Ovary (tissue), 10 donors: ENCODE measurements at regions of chr3 and their contacts with region 1.

Region 1: DNA sequence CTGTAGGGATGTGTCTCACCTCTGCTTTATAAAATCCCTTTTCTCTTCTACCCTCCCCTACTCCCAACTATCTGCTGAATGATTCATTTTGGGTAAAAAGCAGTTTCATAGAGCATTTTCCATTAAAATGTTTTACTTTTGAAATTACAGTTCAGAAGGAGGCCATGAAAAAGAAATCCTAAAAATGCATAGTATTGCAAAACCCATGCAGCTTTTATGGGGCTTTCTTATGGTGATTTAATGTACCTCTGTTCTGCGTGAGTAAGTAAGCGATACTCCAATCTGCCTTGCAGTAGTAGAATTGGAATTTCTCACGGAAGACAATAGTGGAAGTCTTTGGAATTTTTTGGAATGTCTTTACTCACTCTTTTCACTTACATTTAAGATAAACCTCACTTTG is 111.9 kb downstream of the ARPP21 start:
- DNase-seq: no peak
- H3K4me3 ChIP-seq: no peak overlapping the region
- H3K27ac ChIP-seq: no peak overlapping the region
- H3K4me1 ChIP-seq: no peaks in the 10 kb centered on the region
- H3K27me3 ChIP-seq: no peaks in the 10 kb centered on the region
- CTCF ChIP-seq: no peak
- EP300 ChIP-seq: no peak
- POLR2A ChIP-seq: no peak

Region 2: GRCh38 chr3:34504775-34505174 is 1246.4 kb before region 1 on chr3:
- intact Hi-C with region 1: no loop called
- DNase-seq: no peak
- H3K4me3 ChIP-seq: no peak overlapping the region
- H3K27ac ChIP-seq: no peak overlapping the region
- H3K4me1 ChIP-seq: no peaks in the 10 kb centered on the region
- H3K27me3 ChIP-seq: no peaks in the 10 kb centered on the region
- CTCF ChIP-seq: no peak
- EP300 ChIP-seq: no peak
- POLR2A ChIP-seq: no peak

Region 3: DNA sequence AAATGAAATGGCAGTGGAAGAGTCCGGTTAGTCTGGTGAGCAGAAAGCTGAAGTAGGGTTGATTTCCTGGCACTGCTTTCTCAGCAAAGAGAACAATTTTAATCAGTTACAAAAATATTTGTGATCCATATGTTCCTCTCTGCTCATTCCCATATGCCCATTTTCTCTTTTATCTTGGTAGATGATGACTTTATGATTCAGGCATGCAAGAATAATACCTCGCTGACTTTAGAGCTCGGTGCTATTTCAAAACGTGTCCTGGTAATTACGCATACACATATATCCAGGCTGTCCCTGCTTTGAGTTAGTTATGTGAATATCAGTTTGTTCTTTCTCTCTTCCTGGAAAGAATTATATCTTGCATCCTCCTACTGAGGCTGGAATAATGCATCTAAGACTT is 73.4 kb before region 1 on chr3:
- intact Hi-C with region 1: no loop called
- DNase-seq: no peak
- H3K4me3 ChIP-seq: no peak overlapping the region
- H3K27ac ChIP-seq: no peak overlapping the region
- H3K4me1 ChIP-seq: no peaks in the 10 kb centered on the region
- H3K27me3 ChIP-seq: no peaks in the 10 kb centered on the region
- CTCF ChIP-seq: no peak
- EP300 ChIP-seq: no peak
- POLR2A ChIP-seq: no peak

Region 4: GRCh38 chr3:36893137-36893557 is 1141.9 kb after region 1 on chr3:
- intact Hi-C with region 1: loop called in 1 of 4 experiments (anchors 5 kb)
- DNase-seq: no peak
- H3K4me3 ChIP-seq: no peak overlapping the region
- H3K27ac ChIP-seq: no peak overlapping the region
- H3K4me1 ChIP-seq: no peaks in the 10 kb centered on the region
- H3K27me3 ChIP-seq: no peaks in the 10 kb centered on the region
- CTCF ChIP-seq: no peak
- EP300 ChIP-seq: no peak
- POLR2A ChIP-seq: no peak